Upper lobe of right lung (tissue), 1 donor: ENCODE measurements at regions of chr6 and their contacts with region 1.

Region 1: DNA sequence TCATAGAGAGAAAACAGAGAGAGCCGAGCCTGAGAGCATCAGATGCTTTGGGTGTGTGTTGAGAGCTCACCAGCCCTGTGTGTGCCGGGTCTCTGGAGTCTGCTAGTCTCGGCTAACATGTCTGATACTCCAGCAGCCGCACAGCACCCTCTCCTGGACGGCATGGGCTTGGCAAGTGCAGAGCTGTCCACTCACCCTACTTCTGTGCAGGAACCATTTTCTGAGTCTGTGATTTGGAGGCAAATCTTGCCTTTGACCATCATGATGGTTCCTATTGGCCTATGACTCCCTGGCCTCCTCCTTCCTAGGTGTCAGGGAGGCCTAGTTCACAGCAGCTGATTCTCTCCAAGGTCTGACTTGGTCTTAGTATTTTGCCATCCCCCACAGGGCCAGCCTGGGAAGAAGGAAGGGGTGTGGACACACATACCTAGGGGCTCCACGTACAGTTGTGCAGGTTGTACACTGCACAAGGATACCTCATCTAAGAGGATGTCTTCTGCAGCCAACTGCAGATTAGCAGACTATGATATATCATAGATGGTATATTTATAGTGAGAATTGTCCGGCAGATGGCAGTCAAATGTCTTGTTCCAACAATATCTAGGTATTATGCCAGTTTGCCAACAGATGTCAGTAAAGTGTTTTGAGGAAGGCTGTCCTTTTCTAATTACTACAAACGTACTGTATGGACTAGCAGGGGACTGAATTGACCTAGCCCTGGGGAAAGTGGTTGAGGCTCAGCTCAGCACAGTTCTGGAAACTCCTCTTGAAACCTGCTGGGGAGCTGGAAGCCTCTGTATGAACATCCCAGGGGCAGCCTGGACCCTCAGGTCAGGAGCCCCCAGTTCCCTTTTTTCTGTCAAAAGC is 13.0 kb downstream of the FGD2 start:
- DNase-seq: peak; percentile 94
- ATAC-seq: peak; percentile 95
- H3K4me3 ChIP-seq: no peak overlapping the region
- H3K27ac ChIP-seq: no peak overlapping the region
- H3K4me1 ChIP-seq: no peaks in the 10 kb centered on the region
- H3K27me3 ChIP-seq: no peaks in the 10 kb centered on the region
- CTCF ChIP-seq: peak; percentile 79

Region 2: GRCh38 chr6:36280467-36280866 is 738.0 kb before region 1 on chr6:
- intact Hi-C with region 1: no loop called
- DNase-seq: no peak
- ATAC-seq: peak; percentile 41
- H3K4me3 ChIP-seq: no peak overlapping the region
- H3K27ac ChIP-seq: no peak overlapping the region
- H3K4me1 ChIP-seq: no peaks in the 10 kb centered on the region
- H3K27me3 ChIP-seq: peaks cover 7% of the 10 kb centered on the region
- CTCF ChIP-seq: no peak

Region 3: GRCh38 chr6:36820700-36821580 is 197.5 kb before region 1 on chr6:
- intact Hi-C with region 1: no loop called
- DNase-seq: no peak
- ATAC-seq: peak; percentile 13
- H3K4me3 ChIP-seq: no peak overlapping the region
- H3K27ac ChIP-seq: no peak overlapping the region
- H3K4me1 ChIP-seq: no peaks in the 10 kb centered on the region
- H3K27me3 ChIP-seq: no peaks in the 10 kb centered on the region
- CTCF ChIP-seq: no peak

Region 4: GRCh38 chr6:36874443-36875249 is 143.8 kb before region 1 on chr6 and contains the start of gene PPIL1:
- intact Hi-C with region 1: no loop called
- DNase-seq: peak; percentile 91
- ATAC-seq: peak; percentile 93
- H3K4me3 ChIP-seq: peak within 1 kb of the TSS; percentile 93
- H3K27ac ChIP-seq: peak within 1 kb of the TSS; percentile 93
- H3K4me1 ChIP-seq: peaks cover 14% of the 10 kb centered on the region
- H3K27me3 ChIP-seq: peaks cover 4% of the 10 kb centered on the region
- CTCF ChIP-seq: no peak
- total RNA-seq, gene PPIL1: 15.7 TPM

Region 5: DNA sequence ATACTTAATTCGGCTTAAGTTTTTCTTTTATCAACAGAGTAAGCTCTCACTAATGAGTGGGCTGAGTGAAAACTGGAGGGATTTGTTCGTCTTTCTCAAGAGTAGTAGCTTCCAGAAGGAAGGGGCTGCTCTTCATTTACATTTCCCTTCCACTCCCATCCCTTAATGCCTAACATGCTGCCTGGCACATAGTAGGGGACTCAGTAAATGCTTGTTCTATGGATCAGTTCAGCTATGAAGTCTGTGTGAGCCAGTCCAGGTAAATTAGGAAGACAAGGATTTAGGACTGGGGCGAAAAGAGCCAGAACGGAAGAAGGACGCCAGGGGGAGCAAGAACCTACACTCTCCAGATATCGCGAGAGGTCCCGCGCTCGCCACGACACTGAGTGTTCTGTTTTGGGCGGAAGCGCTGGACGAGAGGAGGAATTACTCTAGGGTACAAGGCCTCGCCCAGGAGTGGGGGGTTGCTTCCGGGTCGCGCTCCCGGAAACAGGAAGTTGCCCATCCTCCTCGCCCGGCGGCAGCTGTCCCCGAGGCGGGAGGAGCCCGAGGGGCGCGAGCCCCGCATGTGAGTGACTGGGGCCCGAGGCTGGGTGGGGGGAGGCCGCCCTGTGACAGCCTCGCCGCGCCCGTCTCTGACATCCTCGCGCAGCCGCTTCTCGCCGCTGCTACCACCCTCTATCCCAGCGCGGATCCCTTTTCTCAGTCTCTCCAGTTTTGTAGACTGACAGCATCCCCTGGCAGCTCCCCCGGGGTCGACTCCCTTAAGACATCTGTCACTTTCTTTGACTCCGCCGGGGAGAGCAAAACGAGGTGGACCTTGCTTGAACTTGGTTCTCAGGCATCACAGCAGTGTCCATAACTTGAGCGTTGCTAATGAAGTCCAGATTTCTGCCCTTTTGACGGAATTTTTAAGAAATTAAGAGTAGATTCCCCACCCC is 132.7 kb before region 1 on chr6 and contains the start of gene C6orf89:
- intact Hi-C with region 1: loop called (anchors 10 kb)
- DNase-seq: peak; percentile 98
- ATAC-seq: peak; percentile 100
- H3K4me3 ChIP-seq: peak within 1 kb of the TSS; percentile 93
- H3K27ac ChIP-seq: peak within 1 kb of the TSS; percentile 91
- H3K4me1 ChIP-seq: peaks cover 5% of the 10 kb centered on the region
- H3K27me3 ChIP-seq: no peaks in the 10 kb centered on the region
- CTCF ChIP-seq: peak; percentile 81
- total RNA-seq, gene C6orf89: 57.9 TPM